ENCODE measurements at regions of chr5 and their contacts with region 1.

Region 1: GRCh38 chr5:149500922-149501582 is 50.2 kb downstream of the CSNK1A1 start:
- DNase-seq: no peak
- H3K4me3 ChIP-seq: no peak overlapping the region
- CTCF ChIP-seq: no peak
- POLR2A ChIP-seq: no peak

Region 2: DNA sequence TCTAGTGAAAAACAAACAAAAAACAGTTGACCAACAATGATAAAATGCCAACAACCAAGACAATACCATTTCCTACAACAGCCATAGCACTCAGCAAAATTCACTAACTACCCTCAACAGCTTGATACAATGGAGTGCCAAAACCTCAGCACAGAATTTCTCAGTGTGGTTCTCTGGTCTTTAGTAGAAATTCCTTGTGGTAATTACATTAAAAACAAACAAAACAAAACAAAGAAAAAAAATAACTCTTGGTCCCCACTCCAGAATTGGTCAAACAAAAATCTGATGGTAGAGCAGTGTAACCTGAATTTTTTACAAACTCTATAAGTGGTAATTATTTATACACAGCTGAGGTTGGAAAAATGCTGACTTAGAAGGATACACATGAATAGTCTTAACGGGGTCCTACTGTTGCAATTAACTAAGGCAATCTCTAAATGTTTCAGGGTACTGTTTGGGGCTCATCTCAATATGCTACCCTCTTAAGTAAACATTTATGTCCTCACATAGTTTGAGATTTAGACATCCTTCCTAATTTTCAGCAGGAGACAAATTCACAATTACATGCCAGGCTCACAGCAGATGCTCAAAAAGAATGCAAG is 36.4 kb after region 1 on chr5:
- intact Hi-C with region 1: loop called (anchors 5 kb)
- DNase-seq: no peak
- H3K4me3 ChIP-seq: no peak overlapping the region
- CTCF ChIP-seq: no peak
- POLR2A ChIP-seq: no peak

Region 3: DNA sequence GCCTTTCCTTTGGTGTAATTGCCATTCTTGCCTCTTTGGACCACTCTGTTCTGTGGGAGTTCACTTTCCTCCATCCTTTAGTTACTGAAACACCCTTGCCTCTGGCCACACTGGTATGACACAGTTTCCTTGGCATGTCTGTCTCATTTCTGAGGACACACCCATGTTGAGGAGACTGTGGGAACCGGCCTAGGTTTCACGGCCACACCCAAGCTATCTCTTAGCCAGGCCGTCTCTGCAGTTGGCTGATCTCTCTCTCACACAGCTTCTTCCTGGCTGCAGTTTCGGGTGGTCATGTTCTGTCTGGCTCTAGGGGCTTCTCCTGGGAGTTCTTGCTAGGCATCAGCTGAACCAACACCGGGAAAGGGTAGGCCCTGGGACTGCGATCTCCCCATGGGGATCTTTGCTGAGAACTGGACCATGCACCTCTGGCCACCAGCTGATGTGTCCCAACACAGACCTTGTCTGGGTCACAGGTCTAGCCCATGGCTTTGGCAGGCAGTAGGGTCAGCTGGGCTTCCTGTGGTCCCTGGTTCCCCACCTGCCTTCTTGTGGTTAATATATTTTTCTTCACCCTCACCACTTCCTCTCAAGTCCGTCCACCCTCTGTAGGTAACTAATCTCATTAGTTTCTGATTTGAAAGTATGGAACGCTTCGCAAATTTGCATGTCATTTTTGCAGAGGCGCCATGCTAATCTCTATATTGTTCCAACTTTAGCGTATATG is 105.1 kb after region 1 on chr5:
- intact Hi-C with region 1: no loop called
- DNase-seq: peak in 1 of 2 donors; percentile 84
- H3K4me3 ChIP-seq: no peak overlapping the region
- CTCF ChIP-seq: no peak
- POLR2A ChIP-seq: no peak